Sigmoid colon (tissue), 7 donors: ENCODE measurements at regions of chr20 and their contacts with region 1.

Region 1: GRCh38 chr20:45322952-45323383 is 14.9 kb upstream of the MATN4 start:
- DNase-seq: peak; percentile 79
- H3K4me3 ChIP-seq: no peak overlapping the region
- H3K27ac ChIP-seq: peak overlapping the region in 2 of 4 donors; percentile 49 to 59
- H3K4me1 ChIP-seq: no peaks in the 10 kb centered on the region
- H3K27me3 ChIP-seq: no peaks in the 10 kb centered on the region
- CTCF ChIP-seq: no peak
- EP300 ChIP-seq: no peak
- POLR2A ChIP-seq: no peak

Region 2: DNA sequence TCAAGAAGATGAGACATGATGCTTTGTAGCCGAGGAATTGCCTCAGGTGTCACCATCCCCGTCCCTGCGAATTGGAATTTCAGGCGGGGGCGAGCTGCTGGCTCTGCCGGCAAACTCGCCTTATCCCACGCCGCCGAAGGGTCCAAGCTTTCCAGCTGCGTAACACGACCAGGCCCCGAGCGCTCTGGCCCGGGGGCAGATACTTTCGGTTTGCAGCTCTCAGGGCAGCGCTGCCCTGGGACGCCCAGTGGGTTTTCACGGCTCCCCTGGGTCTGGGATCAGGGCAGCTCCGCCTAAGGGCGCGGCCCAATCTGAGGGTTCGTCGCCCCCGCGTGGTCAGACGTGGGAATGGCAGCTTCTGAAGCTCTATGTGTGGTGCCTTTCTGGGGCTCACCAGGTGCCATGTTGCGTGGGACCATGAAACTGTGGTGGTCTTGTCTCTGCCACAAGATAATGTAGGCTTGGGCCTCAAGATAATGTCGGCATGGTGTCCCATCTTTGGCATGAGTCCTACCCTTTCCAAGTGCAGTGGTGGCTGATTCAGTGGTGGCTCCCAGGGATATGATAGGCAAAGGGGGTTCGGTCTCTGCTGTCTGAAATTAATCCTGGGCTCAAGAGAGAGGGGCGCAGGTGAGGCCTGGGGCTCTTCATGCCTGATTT is 113.9 kb after region 1 on chr20:
- intact Hi-C with region 1: loop called (anchors 1 kb)
- DNase-seq: peak; percentile 93
- H3K4me3 ChIP-seq: peak overlapping the region; percentile 39 to 59 (median 54)
- H3K27ac ChIP-seq: peak overlapping the region; percentile 80 to 87 (median 86)
- H3K4me1 ChIP-seq: peaks cover 0 to 20% (median 7%) of the 10 kb centered on the region in 4 donors
- H3K27me3 ChIP-seq: no peaks in the 10 kb centered on the region
- CTCF ChIP-seq: peak; percentile 88 to 96 (median 93)
- EP300 ChIP-seq: no peak
- POLR2A ChIP-seq: peak in 1 of 2 donors; percentile 8